ENCODE measurements at regions of chr2 and their contacts with region 1.

Region 1: GRCh38 chr2:11129598-11130449 is 25.4 kb upstream of the SLC66A3 start:
- DNase-seq: peak; percentile 83
- ATAC-seq: peak; percentile 85
- H3K4me3 ChIP-seq: peak overlapping the region; percentile 35 to 60 (median 52)
- H3K4me3 Mint-ChIP-seq: peak overlapping the region; percentile 83
- H3K27ac ChIP-seq: peak overlapping the region; percentile 8 to 34
- H3K27ac Mint-ChIP-seq: peak overlapping the region; percentile 80
- H3K4me1 ChIP-seq: peaks cover 24 to 38% of the 10 kb centered on the region in 2 donors
- H3K4me1 Mint-ChIP-seq: peaks cover 36% of the 10 kb centered on the region
- H3K27me3 ChIP-seq: peaks cover 0 to 15% (median 2%) of the 10 kb centered on the region in 4 experiments
- H3K27me3 Mint-ChIP-seq: peaks cover 4% of the 10 kb centered on the region
- CTCF ChIP-seq: peak; percentile 22

Region 2: DNA sequence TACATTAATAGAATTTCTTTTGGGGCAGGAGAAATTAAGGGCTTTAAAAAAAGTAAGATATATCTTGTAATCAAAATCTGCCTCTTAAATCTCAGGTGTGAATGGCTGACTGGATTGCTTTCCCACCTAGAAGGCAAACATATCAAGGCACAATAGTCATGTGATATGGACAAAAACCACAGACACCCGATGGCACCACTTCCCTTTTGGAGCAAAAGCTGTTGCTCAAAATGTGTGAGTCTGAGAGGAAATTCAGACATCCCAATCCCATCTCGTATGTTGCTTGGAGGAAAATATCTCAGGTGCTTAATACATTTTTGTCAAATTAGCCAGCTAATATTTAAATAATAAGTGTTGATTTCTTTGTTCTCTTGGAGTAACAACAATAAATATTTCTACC is 97.4 kb before region 1 on chr2:
- CTCF ChIA-PET with region 1: no interaction called
- POLR2A ChIA-PET with region 1: no interaction called
- intact Hi-C with region 1: no loop called
- DNase-seq: no peak
- ATAC-seq: no peak
- H3K4me3 ChIP-seq: no peak overlapping the region
- H3K4me3 Mint-ChIP-seq: no peak overlapping the region
- H3K27ac ChIP-seq: no peak overlapping the region
- H3K27ac Mint-ChIP-seq: no peak overlapping the region
- H3K4me1 ChIP-seq: no peaks in the 10 kb centered on the region
- H3K4me1 Mint-ChIP-seq: no peaks in the 10 kb centered on the region
- H3K27me3 ChIP-seq: peaks cover 0 to 7% (median 0%) of the 10 kb centered on the region in 4 experiments
- H3K27me3 Mint-ChIP-seq: peaks cover 22% of the 10 kb centered on the region
- CTCF ChIP-seq: no peak

Region 3: GRCh38 chr2:11145350-11145749 is 15.5 kb after region 1 on chr2:
- CTCF ChIA-PET with region 1: interaction called, 39 read pairs
- POLR2A ChIA-PET with region 1: no interaction called
- intact Hi-C with region 1: no loop called
- DNase-seq: no peak
- ATAC-seq: peak; percentile 17
- H3K4me3 ChIP-seq: no peak overlapping the region
- H3K4me3 Mint-ChIP-seq: no peak overlapping the region
- H3K27ac ChIP-seq: no peak overlapping the region
- H3K27ac Mint-ChIP-seq: no peak overlapping the region
- H3K4me1 ChIP-seq: peaks cover 0 to 4% of the 10 kb centered on the region in 2 donors
- H3K4me1 Mint-ChIP-seq: peaks cover 5% of the 10 kb centered on the region
- H3K27me3 ChIP-seq: no peaks in the 10 kb centered on the region
- H3K27me3 Mint-ChIP-seq: peaks cover 17% of the 10 kb centered on the region
- CTCF ChIP-seq: no peak

Region 4: DNA sequence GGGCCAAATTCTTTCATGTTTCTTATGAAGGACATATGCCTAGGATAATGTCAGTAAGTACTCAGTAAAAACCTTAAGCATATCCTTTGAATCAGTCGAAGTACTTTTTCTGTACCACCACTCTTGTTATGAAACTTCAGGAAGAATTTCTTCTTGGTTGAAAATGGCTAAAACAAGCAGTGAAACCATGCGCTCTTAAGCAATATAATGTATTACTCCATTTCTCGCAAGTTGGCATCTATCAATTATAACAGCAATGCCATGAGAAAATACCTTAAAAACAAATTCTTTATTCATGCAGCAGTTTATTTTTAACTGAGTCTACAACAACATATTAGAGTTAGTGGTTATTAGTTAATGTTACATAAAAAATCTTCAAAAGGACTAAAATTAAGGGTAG is 66.4 kb after region 1 on chr2:
- CTCF ChIA-PET with region 1: interaction called, 3 read pairs
- POLR2A ChIA-PET with region 1: no interaction called
- intact Hi-C with region 1: loop called (anchors 5 kb)
- DNase-seq: no peak
- ATAC-seq: no peak
- H3K4me3 ChIP-seq: no peak overlapping the region
- H3K4me3 Mint-ChIP-seq: no peak overlapping the region
- H3K27ac ChIP-seq: no peak overlapping the region
- H3K27ac Mint-ChIP-seq: no peak overlapping the region
- H3K4me1 ChIP-seq: no peaks in the 10 kb centered on the region
- H3K4me1 Mint-ChIP-seq: no peaks in the 10 kb centered on the region
- H3K27me3 ChIP-seq: no peaks in the 10 kb centered on the region
- H3K27me3 Mint-ChIP-seq: no peaks in the 10 kb centered on the region
- CTCF ChIP-seq: no peak

Region 5: DNA sequence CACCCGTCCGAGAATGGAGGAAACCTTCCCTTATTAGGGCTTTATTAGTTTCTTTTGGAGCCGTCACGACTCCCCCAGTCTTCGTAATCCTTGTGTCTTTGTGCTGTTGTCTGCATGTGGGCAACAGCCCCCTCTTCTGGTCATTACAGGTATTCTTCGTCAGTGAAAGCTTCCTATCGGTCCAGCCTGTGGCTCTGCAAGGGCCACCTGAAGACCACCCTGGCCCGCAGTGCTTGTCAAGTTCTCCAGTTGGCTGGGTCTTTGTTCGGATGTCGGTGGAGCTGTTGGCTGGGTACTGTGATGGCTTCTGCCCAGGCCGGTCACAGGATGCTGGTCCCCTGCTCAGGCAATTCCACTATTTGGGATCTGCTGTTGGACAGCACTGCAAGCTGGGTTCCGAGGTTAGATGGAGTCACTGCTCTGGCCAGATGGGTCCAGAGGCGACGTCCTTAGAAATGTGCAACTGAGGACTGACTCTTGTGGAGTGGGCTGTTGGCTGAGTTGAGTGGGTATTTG is 317.0 kb after region 1 on chr2:
- CTCF ChIA-PET with region 1: interaction called, 59 read pairs
- POLR2A ChIA-PET with region 1: interaction called, 4 read pairs
- intact Hi-C with region 1: no loop called
- DNase-seq: peak; percentile 74
- ATAC-seq: peak; percentile 51
- H3K4me3 ChIP-seq: no peak overlapping the region
- H3K4me3 Mint-ChIP-seq: no peak overlapping the region
- H3K27ac ChIP-seq: no peak overlapping the region
- H3K27ac Mint-ChIP-seq: no peak overlapping the region
- H3K4me1 ChIP-seq: no peaks in the 10 kb centered on the region
- H3K4me1 Mint-ChIP-seq: no peaks in the 10 kb centered on the region
- H3K27me3 ChIP-seq: no peaks in the 10 kb centered on the region
- H3K27me3 Mint-ChIP-seq: no peaks in the 10 kb centered on the region
- CTCF ChIP-seq: peak; percentile 89

Measured in B cell (primary cell).